ENCODE measurements at regions of chr1 and their contacts with region 1.

Region 1: DNA sequence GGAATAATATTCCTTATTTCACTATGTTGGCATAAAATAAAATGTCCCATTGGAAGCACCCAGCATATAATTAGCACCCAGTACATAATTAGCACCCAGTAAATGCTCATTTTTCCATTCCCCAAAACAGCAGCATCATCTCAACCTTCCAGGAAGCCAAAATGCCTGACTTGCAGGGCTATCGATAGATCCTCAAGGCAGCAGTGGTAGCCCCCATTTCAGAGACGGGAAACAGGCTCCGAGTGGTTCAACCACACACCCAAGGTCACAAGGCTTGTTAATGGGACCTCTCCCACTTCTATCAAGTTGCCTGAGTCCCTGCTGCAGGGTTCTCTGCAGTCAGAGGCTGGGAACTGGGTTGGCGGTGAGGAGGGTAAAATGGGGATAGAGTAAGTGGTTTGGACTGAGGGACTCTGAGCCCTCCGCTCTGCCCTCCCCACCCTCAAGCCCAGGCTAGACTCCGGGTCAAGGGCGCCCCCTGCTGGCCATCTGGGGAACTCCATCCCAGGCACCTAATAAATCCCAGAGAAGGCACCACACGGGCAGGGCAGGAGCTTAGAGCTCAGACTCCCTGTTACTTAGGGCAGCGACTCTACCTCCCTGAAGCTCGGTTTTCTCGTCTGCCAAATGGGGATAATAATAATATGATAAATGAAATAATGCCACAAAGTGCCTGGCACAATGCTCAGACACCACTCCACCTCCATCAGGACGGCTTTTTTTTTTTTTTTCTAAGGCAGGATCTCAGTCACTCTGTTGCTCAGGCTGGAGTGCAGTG is 21.9 kb upstream of the LAPTM5 start:
- DNase-seq: peak; percentile 69 to 98 (median 90)

Region 2: GRCh38 chr1:29230553-29231378 is 1548.7 kb before region 1 on chr1 and contains the start of gene MECR:
- intact Hi-C with region 1: loop called (anchors 10 kb)
- DNase-seq: peak; percentile 92 to 99 (median 96)

Region 3: GRCh38 chr1:30718636-30719405 is 60.7 kb before region 1 on chr1:
- intact Hi-C with region 1: loop called (anchors 1 kb)
- DNase-seq: peak in 6 of 10 donors; percentile 81 to 90 (median 89)

Measured in posterior cingulate gyrus (tissue), 11 donors.